Lower leg skin (tissue), 4 donors: ENCODE measurements at regions of chr5 and their contacts with region 1.

Region 1: GRCh38 chr5:177454397-177455035 is 7.9 kb downstream of the PRR7 start:
- DNase-seq: peak; percentile 88 to 98
- H3K4me3 ChIP-seq: peak overlapping the region; percentile 24
- CTCF ChIP-seq: no peak
- POLR2A ChIP-seq: no peak

Region 2: DNA sequence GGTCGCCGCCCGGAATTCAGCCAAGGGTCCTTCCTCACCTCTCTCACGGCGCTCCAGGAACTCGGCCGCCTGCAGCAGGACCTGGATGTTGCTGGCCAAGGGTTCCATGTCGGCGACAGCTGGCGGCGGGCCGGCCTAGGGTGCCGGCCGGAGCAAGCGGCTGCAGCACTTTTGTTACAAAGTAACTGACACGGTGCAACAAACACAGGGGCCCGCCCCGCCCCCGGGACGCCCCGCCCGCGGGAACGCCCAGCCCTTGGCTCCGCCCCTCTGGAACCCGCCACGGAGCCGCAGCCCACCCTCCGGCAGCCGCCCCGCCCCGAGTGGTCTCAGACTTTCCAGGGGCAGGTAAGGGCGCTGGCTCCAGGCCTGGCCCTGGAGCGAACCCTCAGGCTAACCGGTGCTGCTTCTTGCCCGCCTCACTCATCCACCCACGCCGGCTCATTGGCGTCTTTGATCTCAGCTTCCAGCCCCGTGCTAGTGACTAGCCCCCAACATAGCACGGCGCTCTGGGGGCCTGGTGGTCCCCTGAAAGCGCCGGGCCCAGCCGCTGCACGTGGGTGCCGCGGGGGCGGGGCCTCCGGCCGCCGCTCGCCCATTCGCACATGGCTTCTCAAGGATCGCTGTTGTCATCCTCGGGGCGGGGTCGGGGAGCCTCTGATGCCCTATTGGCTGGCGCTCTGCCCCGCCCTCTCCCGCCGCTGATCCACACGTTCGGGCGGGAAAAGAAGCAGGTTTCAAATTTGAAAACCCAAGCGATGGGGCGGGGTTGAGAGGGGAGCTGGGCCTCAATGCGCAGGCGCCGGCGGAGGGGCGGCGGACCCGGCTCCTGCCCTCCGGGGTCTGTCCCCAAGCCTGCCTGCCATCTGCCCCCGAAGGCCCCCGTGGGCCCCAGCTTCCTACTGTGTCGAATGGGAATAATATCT is 142.5 kb before region 1 on chr5 and contains the start of gene MXD3:
- intact Hi-C with region 1: loop called (anchors 10 kb)
- DNase-seq: peak; percentile 96 to 99
- H3K4me3 ChIP-seq: peak within 1 kb of the TSS; percentile 34
- CTCF ChIP-seq: no peak
- POLR2A ChIP-seq: no peak
- total RNA-seq, gene MXD3: 4.9 to 19.8 (median 13.2) TPM

Region 3: DNA sequence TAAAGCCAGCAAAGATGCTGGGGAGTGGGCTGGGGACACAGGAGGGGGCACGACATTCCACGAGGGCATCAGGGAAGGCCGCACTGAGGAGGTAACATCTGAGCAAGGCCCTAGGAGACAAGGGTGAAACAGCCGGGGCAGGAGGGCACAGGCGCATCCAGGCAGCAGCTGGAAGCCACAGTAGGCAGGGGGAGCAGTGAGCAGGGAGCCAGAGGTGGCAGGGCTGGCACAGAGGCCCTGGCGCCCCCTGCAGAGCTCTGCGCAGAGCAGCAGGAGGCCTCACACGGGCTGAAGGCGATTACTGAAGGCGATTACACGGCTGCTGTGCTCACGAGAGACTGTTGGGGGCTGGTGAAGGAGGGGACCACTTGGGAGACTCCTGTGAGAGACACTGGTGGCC is 118.4 kb before region 1 on chr5:
- intact Hi-C with region 1: no loop called
- DNase-seq: no peak
- H3K4me3 ChIP-seq: no peak overlapping the region
- CTCF ChIP-seq: no peak
- POLR2A ChIP-seq: no peak

Region 4: GRCh38 chr5:177403792-177404640 is 50.5 kb before region 1 on chr5:
- intact Hi-C with region 1: loop called (anchors 2 kb)
- DNase-seq: peak; percentile 75 to 96
- H3K4me3 ChIP-seq: peak overlapping the region; percentile 39
- CTCF ChIP-seq: peak in 1 of 3 donors; percentile 65
- POLR2A ChIP-seq: no peak